Lower leg skin (tissue), 4 donors: ENCODE measurements at regions of chr1 and their contacts with region 1.

Region 1: GRCh38 chr1:78114034-78114956 is 68.5 kb downstream of the GIPC2 start:
- DNase-seq: peak in 1 of 2 donors; percentile 52
- H3K4me3 ChIP-seq: no peak overlapping the region
- CTCF ChIP-seq: no peak
- POLR2A ChIP-seq: no peak

Region 2: DNA sequence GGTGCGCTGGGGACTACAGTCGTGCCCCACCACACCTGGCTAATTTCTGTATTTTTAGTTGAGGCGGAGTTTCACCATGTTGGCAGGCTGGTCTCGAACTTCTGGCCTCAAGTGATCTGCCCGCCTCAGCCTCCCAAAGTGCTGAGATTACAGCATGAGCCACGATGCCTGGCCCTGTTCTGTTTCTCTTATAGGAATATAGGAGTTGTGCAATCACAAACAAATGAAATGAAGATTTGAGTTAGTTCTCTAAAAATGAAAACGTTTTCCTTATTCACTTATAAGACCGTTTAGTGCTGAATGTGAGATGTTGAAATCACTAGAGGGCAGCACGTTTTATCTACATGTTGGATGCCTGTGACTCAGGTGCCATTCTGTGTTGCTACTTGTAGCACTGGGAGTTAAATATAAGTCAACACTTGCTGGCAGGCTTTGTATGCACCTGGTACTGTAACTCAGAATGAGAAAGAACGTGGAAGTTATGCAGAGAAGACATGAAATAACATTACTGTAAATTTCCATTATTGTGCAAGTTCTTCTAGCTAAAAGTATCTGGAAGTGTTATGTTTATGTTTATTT is 289.1 kb before region 1 on chr1:
- intact Hi-C with region 1: loop called (anchors 10 kb)
- DNase-seq: peak in 1 of 2 donors; percentile 63
- H3K4me3 ChIP-seq: no peak overlapping the region
- CTCF ChIP-seq: no peak
- POLR2A ChIP-seq: no peak

Region 3: DNA sequence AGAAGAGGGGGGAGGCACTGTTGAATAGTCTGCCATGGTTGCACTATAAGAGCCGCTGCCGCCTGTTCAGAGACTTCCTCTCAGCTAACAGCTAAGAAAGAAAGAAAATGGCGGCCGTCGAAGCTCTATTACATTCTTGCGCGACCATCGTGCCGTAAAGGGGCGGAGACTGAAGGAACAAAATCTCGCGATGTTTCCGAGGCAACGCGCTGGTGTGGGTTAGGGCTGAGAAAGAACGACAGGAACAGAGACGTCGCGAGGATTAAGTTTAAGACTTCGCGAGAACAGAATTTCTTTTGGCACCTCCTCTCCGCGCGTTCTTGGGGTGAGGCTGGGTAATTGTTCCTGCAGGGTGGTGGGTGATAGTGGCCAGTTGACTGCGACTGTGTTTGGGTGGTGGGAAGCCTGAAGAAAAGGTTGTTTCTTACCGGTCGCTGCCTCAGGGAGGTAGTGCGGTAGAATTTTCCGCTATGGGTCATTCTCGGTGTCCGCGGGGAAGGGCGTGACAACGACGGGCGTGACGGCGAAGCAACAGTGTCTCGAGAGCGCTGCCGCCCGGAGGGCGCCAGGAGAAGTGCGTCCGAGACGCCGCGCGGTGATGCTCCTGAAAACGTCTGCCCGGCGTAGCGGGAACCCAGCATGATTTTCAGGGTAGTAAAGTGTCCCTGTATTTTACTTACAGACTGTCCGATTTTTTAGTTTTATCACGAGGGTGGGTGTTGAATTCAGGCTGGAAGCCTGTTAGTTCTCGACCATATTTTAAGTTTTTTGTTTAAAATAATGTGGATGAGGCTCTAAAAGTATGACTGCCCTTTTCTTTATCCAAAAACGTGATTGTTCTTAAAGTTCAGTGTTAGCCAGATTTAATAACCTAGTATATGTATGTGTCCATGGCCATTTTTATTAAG is 135.1 kb before region 1 on chr1 and contains the start of gene FUBP1:
- intact Hi-C with region 1: loop called (anchors 10 kb)
- DNase-seq: peak; percentile 98 to 99
- H3K4me3 ChIP-seq: peak within 1 kb of the TSS; percentile 72
- CTCF ChIP-seq: peak in 1 of 3 donors; percentile 75
- POLR2A ChIP-seq: peak in 1 of 2 donors; percentile 4
- total RNA-seq, gene FUBP1: 48.7 to 105 (median 58.9) TPM